ENCODE measurements at regions of chr11 and their contacts with region 1.

Region 1: GRCh38 chr11:111601979-111602864 is at the start of gene SIK2:
- DNase-seq: peak; percentile 97
- CTCF ChIP-seq: peak; percentile 92

Region 2: DNA sequence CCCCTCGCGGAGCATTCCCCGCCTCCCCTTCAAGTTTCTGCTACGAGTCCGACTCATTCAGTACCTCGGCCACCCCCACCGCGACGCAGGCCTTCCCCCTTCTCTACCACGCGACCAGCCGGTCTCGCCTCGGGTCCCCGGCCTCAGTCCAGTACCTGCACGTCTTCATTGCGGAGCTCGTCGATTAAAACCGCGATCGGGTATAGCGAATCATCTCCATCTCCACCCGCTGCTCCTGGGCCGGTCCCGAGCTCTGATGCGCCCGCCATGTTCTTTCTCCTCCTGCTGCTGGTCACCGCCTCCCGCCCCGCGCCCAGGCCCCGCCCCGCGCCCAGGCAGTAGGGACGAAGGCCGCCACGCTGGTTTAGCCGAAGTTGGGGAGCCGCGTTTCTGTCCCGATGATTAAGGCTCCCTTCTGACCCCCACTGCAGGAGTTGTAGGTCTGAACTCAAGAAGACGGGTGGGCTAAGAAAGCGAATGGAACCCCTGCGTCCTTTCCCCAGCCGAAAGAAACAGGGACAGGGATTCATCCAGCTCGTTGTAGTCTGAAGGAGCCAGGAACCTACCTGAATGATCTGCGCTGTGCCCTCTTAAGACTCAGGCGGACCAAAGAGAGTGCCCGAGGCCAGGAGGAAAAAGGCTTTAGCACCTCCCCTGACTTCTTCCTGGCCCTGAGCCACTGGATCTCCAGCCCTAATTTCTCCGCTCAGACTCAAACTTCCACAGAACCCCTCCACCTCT is 164.0 kb after region 1 on chr11 and contains the start of gene PPP2R1B:
- in situ Hi-C with region 1: loop called (anchors 10 kb)
- DNase-seq: peak; percentile 97
- CTCF ChIP-seq: no peak

Region 3: GRCh38 chr11:111788051-111788450 is 185.8 kb after region 1 on chr11:
- in situ Hi-C with region 1: loop called (anchors 5 kb)
- DNase-seq: no peak
- CTCF ChIP-seq: no peak

Measured in GM13976 (cell line).